ENCODE measurements at regions of chr5 and their contacts with region 1.

Region 1: DNA sequence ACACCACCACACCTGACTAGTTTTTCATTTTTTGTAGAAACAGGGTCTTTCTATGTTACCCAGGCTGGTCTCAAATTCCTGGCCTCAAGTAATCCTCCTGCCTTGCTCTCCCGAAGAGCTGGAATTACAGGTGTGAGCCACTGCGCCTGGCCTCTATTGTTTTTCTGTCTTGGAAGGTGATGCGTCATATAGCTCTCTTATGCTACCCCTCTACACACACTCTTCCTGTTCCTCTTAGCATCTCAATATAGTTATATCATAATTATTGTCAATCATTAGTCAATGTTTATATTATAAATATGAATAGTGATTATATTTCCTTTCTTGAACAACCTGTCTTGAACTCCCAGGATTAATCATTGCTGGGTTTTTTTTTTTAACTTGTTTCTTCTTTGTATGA is 7.3 kb downstream of the PKD2L2 start:
- DNase-seq: peak; percentile 73
- H3K4me3 ChIP-seq: no peak overlapping the region
- H3K27ac ChIP-seq: peak overlapping the region; percentile 21
- H3K4me1 ChIP-seq: peaks cover 37% of the 10 kb centered on the region
- H3K27me3 ChIP-seq: no peaks in the 10 kb centered on the region
- CTCF ChIP-seq: no peak
- POLR2A ChIP-seq: no peak

Region 2: DNA sequence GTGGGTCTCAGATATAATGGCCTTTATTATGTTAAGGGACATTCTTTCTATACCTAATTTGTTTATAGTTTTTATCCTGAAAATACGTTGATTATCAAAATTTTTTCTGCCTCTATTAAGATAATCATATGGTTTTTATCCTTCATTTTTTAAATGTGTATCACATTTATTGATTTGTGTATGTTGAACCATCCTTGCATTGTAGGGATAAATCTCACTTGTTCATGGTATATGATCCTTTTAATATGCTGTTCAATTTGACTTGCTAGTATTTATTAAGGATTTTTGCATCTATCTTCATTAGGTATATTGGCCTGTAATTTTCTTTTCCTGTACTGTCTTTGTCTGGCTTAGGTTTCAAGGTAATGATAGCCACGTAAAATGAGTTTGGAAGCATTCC is 18.2 kb after region 1 on chr5:
- CTCF ChIA-PET with region 1: interaction called, 14 read pairs
- POLR2A ChIA-PET with region 1: no interaction called
- dilution Hi-C with region 1: no loop called
- intact Hi-C with region 1: no loop called
- DNase-seq: no peak
- H3K4me3 ChIP-seq: no peak overlapping the region
- H3K27ac ChIP-seq: no peak overlapping the region
- H3K4me1 ChIP-seq: no peaks in the 10 kb centered on the region
- H3K27me3 ChIP-seq: no peaks in the 10 kb centered on the region
- CTCF ChIP-seq: no peak
- POLR2A ChIP-seq: no peak

Region 3: DNA sequence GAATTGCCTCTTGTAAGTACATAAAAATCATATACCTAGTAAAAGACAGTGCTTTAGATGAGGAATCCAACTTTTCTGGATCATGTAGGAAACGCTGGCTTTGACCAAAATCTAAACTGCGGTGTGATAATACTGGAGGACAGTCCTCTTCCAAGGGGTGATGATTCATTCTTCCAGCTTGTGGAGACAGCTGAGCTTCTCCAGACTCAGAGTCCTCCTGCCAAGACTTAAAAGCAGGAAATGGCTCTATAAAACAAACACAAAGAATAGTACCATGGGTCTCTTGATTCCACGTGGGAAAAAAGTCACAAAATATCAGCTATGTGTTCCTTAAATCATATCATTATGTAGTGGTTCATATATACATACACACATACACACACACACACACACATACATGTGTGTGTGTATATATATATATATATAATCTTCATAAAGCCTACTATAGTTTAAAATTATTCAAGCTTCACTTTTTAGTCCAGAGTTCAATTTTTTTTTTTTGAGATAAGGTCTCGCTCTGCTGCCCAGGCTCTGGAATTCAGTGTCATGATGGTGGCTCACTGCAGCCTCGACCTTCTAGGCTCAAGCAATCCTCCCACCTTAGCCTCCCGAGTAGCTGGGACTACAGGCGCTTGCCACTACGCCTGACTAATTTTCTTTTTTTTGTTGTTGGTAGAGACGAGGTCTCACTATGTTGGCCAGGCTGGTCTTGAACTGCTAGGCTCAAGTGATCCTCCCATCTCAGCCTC is 57.7 kb after region 1 on chr5:
- CTCF ChIA-PET with region 1: no interaction called
- POLR2A ChIA-PET with region 1: no interaction called
- dilution Hi-C with region 1: no loop called
- intact Hi-C with region 1: loop called (anchors 2 kb)
- DNase-seq: peak; percentile 91
- H3K4me3 ChIP-seq: peak overlapping the region in 1 of 3 experiments; percentile 23
- H3K27ac ChIP-seq: peak overlapping the region; percentile 70
- H3K4me1 ChIP-seq: peaks cover 36% of the 10 kb centered on the region
- H3K27me3 ChIP-seq: no peaks in the 10 kb centered on the region
- CTCF ChIP-seq: no peak
- POLR2A ChIP-seq: no peak

Region 4: GRCh38 chr5:138418444-138418843 is 521.9 kb after region 1 on chr5:
- CTCF ChIA-PET with region 1: no interaction called
- POLR2A ChIA-PET with region 1: no interaction called
- dilution Hi-C with region 1: no loop called
- intact Hi-C with region 1: no loop called
- DNase-seq: no peak
- H3K4me3 ChIP-seq: no peak overlapping the region
- H3K27ac ChIP-seq: no peak overlapping the region
- H3K4me1 ChIP-seq: no peaks in the 10 kb centered on the region
- H3K27me3 ChIP-seq: no peaks in the 10 kb centered on the region
- CTCF ChIP-seq: no peak
- POLR2A ChIP-seq: no peak